Heart right ventricle (tissue), 16 donors: ENCODE measurements at regions of chr10 and their contacts with region 1.

Region 1: GRCh38 chr10:29304264-29305030 is 15.6 kb downstream of the LYZL1 start:
- DNase-seq: peak; percentile 15 to 56
- ATAC-seq: peak; percentile 69 to 94 (median 84)
- H3K4me3 ChIP-seq: peak overlapping the region in 2 of 10 donors; percentile 10 to 13
- H3K27ac ChIP-seq: peak overlapping the region in 3 of 10 donors; percentile 25 to 41 (median 38)
- H3K4me1 ChIP-seq: peaks cover 0 to 11% (median 7%) of the 10 kb centered on the region in 9 donors
- H3K27me3 ChIP-seq: peaks cover 0 to 4% (median 0%) of the 10 kb centered on the region in 7 donors
- CTCF ChIP-seq: peak; percentile 37 to 86 (median 80)

Region 2: GRCh38 chr10:28628184-28628893 is 676.1 kb before region 1 on chr10:
- intact Hi-C with region 1: loop called in 6 of 10 experiments (anchors 1 to 10 kb)
- DNase-seq: peak; percentile 71 to 76
- ATAC-seq: peak; percentile 85 to 94 (median 90)
- H3K4me3 ChIP-seq: no peak overlapping the region
- H3K27ac ChIP-seq: no peak overlapping the region
- H3K4me1 ChIP-seq: peaks cover 0 to 9% (median 0%) of the 10 kb centered on the region in 9 donors
- H3K27me3 ChIP-seq: peaks cover 0 to 19% (median 0%) of the 10 kb centered on the region in 7 donors
- CTCF ChIP-seq: peak; percentile 74 to 93 (median 91)

Region 3: DNA sequence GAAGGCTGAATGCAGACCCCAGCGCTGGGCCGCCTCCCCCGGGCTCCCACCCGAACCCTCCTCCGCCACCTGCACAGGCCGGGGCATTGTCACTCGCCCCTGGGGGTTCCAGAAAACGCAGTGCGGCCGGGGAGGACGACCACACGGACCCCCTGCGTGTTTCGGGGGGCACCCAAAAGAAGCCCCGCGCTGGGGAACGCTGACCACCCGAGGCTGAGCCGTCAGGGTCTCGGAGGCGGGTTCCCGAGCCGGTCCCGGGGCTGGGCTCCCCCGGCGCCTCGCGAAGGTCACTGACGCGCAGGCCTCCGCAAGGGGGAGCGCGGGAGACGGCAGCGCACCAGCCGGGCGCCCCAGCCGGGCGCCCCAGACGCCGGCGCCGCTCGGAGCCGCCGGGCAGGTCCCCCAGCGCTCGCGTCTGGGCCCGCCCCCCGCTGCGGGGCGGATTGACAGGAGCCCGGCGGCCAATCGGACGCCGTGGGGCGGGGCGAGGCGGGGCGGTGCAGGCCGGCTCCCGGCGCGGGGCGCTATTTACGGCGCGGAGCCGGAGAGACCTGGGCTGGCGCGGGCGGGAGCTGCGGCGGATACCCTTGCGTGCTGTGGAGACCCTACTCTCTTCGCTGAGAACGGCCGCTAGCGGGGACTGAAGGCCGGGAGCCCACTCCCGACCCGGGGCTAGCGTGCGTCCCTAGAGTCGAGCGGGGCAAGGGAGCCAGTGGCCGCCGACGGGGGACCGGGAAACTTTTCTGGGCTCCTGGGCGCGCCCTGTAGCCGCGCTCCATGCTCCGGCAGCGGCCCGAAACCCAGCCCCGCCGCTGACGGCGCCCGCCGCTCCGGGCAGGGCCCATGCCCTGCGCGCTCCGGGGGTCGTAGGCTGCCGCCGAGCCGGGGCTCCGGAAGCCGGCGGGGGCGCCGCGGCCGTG is 627.2 kb before region 1 on chr10 and contains the start of gene BAMBI:
- intact Hi-C with region 1: loop called in 3 of 10 experiments (anchors 5 kb)
- DNase-seq: peak; percentile 89 to 93
- ATAC-seq: peak; percentile 94 to 98 (median 98)
- H3K4me3 ChIP-seq: peak within 1 kb of the TSS; percentile 72 to 94 (median 82)
- H3K27ac ChIP-seq: peak within 1 kb of the TSS; percentile 68 to 89 (median 80)
- H3K4me1 ChIP-seq: peaks cover 0 to 54% (median 33%) of the 10 kb centered on the region in 9 donors
- H3K27me3 ChIP-seq: peaks cover 0 to 88% (median 12%) of the 10 kb centered on the region in 7 donors
- CTCF ChIP-seq: peak; percentile 51 to 81 (median 68)
- total RNA-seq, gene BAMBI: 11.0 to 29.6 (median 21.3) TPM

Region 4: GRCh38 chr10:28991326-28992270 is 312.8 kb before region 1 on chr10:
- intact Hi-C with region 1: loop called in 3 of 10 experiments (anchors 5 to 10 kb)
- DNase-seq: peak; percentile 32 to 35
- ATAC-seq: peak; percentile 57 to 97 (median 86)
- H3K4me3 ChIP-seq: no peak overlapping the region
- H3K27ac ChIP-seq: peak overlapping the region in 4 of 10 donors; percentile 39 to 68 (median 44)
- H3K4me1 ChIP-seq: peaks cover 0 to 9% (median 0%) of the 10 kb centered on the region in 9 donors
- H3K27me3 ChIP-seq: no peaks in the 10 kb centered on the region
- CTCF ChIP-seq: peak; percentile 30 to 80 (median 68)

Region 5: GRCh38 chr10:29007748-29008610 is 296.5 kb before region 1 on chr10:
- intact Hi-C with region 1: loop called in 1 of 10 experiments (anchors 5 kb)
- DNase-seq: no peak
- ATAC-seq: peak in 2 of 8 donors; percentile 44 to 59
- H3K4me3 ChIP-seq: no peak overlapping the region
- H3K27ac ChIP-seq: no peak overlapping the region
- H3K4me1 ChIP-seq: no peaks in the 10 kb centered on the region
- H3K27me3 ChIP-seq: no peaks in the 10 kb centered on the region
- CTCF ChIP-seq: no peak

Region 6: DNA sequence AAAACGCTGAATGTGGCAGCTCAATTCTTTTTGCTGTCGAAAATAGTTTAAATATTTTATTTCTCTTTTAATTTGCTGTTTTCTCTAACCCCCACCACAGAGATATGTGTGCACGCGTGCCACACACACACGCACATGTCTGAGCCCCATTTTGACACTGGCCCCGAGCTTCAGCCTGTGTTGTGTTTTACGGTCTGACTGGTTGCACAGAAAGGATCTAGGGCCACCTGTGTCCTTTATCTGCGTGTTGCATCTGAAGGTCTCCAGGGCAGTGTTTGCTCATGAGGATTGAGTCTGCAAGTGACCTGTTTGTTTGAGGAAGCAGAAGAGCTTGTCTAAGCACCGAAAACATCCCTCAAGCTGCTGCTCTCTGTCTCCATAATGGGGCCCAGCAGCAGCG is 282.0 kb before region 1 on chr10:
- intact Hi-C with region 1: no loop called
- DNase-seq: no peak
- ATAC-seq: no peak
- H3K4me3 ChIP-seq: no peak overlapping the region
- H3K27ac ChIP-seq: no peak overlapping the region
- H3K4me1 ChIP-seq: no peaks in the 10 kb centered on the region
- H3K27me3 ChIP-seq: no peaks in the 10 kb centered on the region
- CTCF ChIP-seq: no peak

Region 7: DNA sequence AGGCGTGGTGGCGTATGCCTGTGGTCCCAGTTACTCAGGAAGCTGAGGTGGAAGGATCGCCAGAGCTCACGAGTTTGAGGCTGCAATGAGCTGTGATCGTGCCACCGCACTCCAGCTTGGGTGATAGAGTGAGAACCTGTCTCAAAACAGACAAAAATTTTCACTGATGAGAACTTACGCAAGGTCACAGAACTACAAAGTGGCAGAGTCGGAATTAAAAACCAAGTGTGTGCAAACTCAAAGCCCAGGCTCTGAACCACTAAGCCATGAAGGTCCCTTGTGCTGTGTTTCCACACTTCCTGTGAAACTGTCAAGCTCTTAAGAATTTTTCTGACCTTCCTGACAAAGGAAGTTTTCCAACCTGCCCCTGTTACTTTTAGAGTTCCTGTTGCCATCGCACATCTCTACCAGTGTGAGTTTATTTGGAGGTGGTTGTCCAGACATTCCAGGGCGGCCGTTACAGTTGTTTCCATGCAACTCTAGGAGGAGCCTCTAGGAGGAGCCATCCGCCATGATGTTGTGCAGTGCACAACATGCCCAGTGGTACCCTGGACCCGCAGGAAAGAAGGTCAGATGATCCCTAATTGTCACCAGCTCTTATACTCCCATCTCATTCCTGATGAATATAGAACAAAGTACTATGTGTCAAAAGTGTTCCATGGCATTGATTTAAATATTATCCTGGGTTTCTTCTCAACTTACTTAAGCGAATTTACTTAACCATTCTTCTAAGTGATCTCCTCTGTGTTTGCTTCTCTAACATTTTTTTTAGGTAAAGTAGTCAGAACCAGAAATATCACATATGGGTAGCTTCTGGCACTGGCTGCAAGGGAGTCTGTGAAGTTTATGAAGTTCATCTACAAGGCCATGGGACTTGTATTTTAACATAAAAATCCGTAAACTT is 64.6 kb before region 1 on chr10:
- intact Hi-C with region 1: loop called in 1 of 10 experiments (anchors 5 kb)
- DNase-seq: no peak
- ATAC-seq: peak in 3 of 8 donors; percentile 29 to 71 (median 50)
- H3K4me3 ChIP-seq: no peak overlapping the region
- H3K27ac ChIP-seq: no peak overlapping the region
- H3K4me1 ChIP-seq: no peaks in the 10 kb centered on the region
- H3K27me3 ChIP-seq: peaks cover 0 to 6% (median 0%) of the 10 kb centered on the region in 7 donors
- CTCF ChIP-seq: peak in 8 of 9 donors; percentile 7 to 55 (median 46)

Region 8: GRCh38 chr10:29412485-29412884 is 108.0 kb after region 1 on chr10:
- intact Hi-C with region 1: no loop called
- DNase-seq: no peak
- ATAC-seq: no peak
- H3K4me3 ChIP-seq: no peak overlapping the region
- H3K27ac ChIP-seq: peak overlapping the region in 2 of 10 donors; percentile 7 to 51
- H3K4me1 ChIP-seq: peaks cover 0 to 78% (median 48%) of the 10 kb centered on the region in 9 donors
- H3K27me3 ChIP-seq: no peaks in the 10 kb centered on the region
- CTCF ChIP-seq: no peak